ENCODE measurements at regions of chr22 and their contacts with region 1.

Region 1: DNA sequence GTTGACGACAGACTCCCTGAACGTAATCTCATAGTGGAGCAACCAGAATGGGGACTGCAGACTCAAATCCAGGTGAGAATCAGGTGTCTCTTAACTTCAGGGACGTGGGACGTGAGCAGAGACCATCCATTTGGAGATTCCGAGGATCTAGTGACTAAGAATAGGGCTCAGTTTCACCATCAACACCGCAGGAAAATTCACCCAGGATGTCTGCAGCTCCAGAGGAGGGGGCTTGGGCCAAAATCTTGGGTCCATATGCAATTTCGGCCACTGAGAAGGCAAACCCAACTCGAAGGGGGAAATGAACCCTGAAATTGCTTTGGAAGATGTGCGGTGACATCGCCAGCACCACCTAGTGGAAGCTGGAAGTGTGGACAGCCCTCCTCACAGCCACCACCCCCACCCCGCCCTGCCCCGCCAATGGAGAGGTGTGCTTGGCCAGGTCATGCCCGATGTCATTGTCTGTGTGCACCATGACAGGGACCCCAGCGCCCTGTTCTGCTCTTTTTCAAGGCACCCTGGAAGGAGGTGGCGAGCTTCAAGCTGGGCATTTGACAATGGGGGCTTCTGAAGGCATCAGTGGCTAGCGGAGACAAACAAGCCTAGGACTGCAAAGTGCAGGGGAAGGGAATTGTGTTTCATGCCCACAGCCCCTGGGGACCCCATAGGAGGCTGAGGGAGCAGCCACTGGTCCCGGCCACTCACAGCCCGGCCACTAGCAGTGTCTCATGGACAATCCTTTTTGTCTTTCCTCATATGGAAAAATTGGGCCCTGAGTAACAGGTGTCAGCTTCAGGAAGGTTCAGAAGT is 24.8 kb downstream of the APOL1 start:
- DNase-seq: peak; percentile 47
- H3K4me3 Mint-ChIP-seq: no peak overlapping the region
- H3K27ac Mint-ChIP-seq: peak overlapping the region; percentile 24
- H3K4me1 Mint-ChIP-seq: peaks cover 12% of the 10 kb centered on the region
- H3K27me3 Mint-ChIP-seq: no peaks in the 10 kb centered on the region

Region 2: DNA sequence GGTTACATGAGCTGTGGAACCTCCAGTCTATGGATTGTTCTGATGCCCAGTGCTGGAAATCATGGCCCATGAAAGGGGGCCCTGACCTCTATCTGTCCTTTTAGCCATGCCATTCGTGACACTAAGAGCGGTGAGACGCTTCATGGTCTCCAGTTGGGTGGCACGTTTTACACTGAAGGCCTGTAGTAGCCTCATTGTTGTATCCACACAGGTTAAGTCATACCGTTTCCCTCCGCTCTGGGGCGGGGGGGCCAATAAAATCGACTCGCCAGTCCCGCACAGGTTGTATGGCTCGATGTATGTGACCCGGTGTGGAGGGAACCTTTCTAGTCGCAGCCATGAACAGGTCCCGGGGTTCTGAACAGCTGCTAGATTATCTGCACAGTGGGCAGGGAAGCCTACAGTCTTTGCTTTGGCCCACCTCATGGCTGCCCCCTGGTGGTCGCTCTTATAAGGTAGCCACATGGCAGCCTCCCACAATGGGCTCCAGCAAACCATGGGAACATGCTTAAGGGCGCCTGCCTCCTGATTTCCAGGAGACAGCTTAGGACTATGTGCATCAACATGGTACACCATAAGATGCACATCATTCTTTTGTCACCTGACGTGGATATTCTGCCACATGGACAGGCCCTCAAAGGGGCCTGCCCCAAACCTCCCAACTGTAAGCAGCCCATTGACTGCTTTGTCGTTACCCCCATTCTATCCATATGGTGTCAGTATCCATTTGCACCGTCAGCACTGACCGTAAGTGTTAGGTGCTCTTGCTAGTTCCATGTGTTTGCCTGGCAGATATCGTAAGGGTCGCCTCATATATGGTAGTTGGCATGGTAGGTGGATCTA is 97.4 kb before region 1 on chr22:
- intact Hi-C with region 1: no loop called
- DNase-seq: peak; percentile 62
- H3K4me3 Mint-ChIP-seq: no peak overlapping the region
- H3K27ac Mint-ChIP-seq: no peak overlapping the region
- H3K4me1 Mint-ChIP-seq: peaks cover 5% of the 10 kb centered on the region
- H3K27me3 Mint-ChIP-seq: no peaks in the 10 kb centered on the region

Region 3: GRCh38 chr22:36194971-36195370 is 82.7 kb before region 1 on chr22:
- intact Hi-C with region 1: loop called (anchors 1 kb)
- DNase-seq: peak; percentile 14
- H3K4me3 Mint-ChIP-seq: no peak overlapping the region
- H3K27ac Mint-ChIP-seq: no peak overlapping the region
- H3K4me1 Mint-ChIP-seq: peaks cover 16% of the 10 kb centered on the region
- H3K27me3 Mint-ChIP-seq: peaks cover 7% of the 10 kb centered on the region

Region 4: DNA sequence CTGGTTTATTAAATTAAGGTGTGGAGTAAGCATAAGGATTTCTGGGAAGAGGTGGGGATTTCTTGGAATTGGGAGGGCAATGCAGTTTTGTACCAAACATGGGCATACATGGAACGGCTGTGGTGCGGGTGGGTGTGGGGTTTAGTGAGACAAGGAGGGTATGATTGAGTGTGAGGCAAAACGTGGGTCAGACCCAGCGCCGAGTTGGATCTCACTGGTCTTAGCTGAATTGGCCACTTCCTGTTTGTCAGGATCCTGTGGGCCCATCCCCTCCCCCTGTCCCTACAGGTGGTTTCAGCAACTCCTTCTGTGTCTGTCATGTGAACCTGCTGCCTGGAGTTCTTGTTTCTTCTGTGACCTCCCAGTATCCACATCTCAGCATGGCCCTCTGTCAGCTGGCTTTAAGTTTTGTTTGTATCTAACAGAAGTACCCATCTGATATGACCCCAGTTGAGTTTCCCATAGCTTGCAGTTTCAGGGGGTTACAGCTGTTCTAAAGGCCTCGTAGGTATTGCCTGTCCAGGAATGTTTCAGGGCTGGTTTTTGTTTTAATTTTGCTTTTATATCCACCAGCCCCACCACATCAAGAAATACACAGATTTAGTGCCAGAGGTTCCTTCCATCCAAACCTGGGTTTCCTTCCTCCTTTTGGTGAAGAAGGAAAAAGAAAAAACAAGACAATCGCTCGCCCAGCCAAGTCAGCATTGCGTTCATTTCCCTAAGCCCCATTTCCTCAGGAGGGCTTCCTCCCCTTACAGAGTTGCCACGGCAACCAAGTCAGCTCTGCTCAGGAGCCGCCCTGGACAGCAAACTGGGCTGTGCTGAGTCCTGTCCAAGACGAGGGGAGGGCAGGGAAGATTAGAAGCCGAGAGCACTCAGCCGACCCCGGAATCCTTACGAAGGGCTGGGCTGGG is 18.7 kb before region 1 on chr22:
- intact Hi-C with region 1: loop called (anchors 2 kb)
- DNase-seq: peak; percentile 25
- H3K4me3 Mint-ChIP-seq: peak overlapping the region; percentile 16
- H3K27ac Mint-ChIP-seq: peak overlapping the region; percentile 76
- H3K4me1 Mint-ChIP-seq: peaks cover 53% of the 10 kb centered on the region
- H3K27me3 Mint-ChIP-seq: no peaks in the 10 kb centered on the region